Left colon (tissue), 2 donors: ENCODE measurements at regions of chr19 and their contacts with region 1.

Region 1: GRCh38 chr19:19531951-19532805 is 3.5 kb downstream of the YJEFN3 start:
- DNase-seq: peak; percentile 51 to 91
- ATAC-seq: peak; percentile 72

Region 2: DNA sequence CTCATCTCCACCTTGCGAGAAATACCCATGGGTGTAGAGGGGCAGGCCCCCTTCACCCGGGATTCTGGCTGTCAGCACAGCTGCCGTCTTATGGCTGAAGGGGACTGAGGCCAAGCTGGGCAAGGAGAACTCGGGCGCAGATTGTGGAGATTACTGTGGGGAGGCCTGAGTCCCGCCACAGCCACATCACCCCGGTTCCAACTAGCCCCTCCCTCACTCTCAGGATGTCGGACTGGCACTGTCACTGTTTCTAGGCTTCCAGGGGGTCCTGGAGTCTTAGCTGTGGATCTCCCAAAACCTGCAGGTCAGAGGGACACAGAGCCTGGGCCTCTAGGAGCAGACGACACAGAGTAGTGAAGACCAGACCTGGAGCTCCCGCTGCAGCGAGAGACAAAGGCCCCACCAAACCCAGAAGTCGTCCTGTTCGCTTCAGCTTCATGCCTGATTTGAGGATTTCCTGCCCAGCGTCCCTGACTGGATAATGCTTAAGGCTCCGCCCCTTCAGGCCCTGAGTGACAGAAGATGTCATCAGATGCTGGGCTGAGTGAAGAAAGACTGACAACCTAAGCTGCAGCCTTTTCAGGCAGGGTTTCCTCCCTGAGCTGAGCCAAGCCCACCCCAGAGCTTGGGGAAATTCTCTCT is 424.4 kb after region 1 on chr19:
- intact Hi-C with region 1: loop called in 1 of 2 experiments (anchors 10 kb)
- DNase-seq: no peak
- ATAC-seq: no peak